ENCODE measurements at regions of chrX and their contacts with region 1.

Region 1: DNA sequence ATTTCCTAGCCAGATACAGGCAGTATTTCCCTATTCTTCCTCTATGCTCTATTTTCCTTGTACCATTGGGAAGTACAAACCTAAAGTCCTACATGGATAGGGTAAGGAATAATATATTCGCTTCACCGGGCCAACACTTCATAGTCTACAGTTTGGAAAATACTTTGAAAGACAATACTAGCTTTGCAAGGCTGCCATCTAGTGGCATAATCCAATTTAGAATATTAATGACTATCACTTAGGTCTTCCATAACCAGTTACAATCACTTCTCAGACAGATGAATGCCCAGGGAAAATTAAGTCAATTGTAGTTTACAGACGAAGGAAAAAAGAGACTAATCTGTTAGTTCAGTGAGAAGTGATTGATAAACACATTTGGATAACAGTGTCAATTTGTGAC is 141.0 kb upstream of the FAM47C start:
- DNase-seq: peak; percentile 29
- H3K4me3 ChIP-seq: no peak overlapping the region
- H3K27ac ChIP-seq: no peak overlapping the region
- H3K4me1 ChIP-seq: no peaks in the 10 kb centered on the region
- H3K27me3 ChIP-seq: no peaks in the 10 kb centered on the region
- CTCF ChIP-seq: peak in 1 of 2 donors; percentile 23
- POLR2A ChIP-seq: no peak

Region 2: GRCh38 chrX:35890699-35891098 is 976.4 kb before region 1 on chrX:
- CTCF ChIA-PET with region 1: no interaction called
- POLR2A ChIA-PET with region 1: no interaction called
- dilution Hi-C with region 1: no loop called
- intact Hi-C with region 1: loop called (anchors 2 kb)
- DNase-seq: no peak
- H3K4me3 ChIP-seq: no peak overlapping the region
- H3K27ac ChIP-seq: no peak overlapping the region
- H3K4me1 ChIP-seq: no peaks in the 10 kb centered on the region
- H3K27me3 ChIP-seq: no peaks in the 10 kb centered on the region
- CTCF ChIP-seq: peak in 1 of 2 donors; percentile 21
- POLR2A ChIP-seq: no peak

Region 3: GRCh38 chrX:36573720-36574119 is 293.4 kb before region 1 on chrX:
- CTCF ChIA-PET with region 1: no interaction called
- POLR2A ChIA-PET with region 1: no interaction called
- dilution Hi-C with region 1: no loop called
- intact Hi-C with region 1: no loop called
- DNase-seq: no peak
- H3K4me3 ChIP-seq: no peak overlapping the region
- H3K27ac ChIP-seq: no peak overlapping the region
- H3K4me1 ChIP-seq: no peaks in the 10 kb centered on the region
- H3K27me3 ChIP-seq: no peaks in the 10 kb centered on the region
- CTCF ChIP-seq: no peak
- POLR2A ChIP-seq: no peak

Region 4: GRCh38 chrX:36640047-36640631 is 227.0 kb before region 1 on chrX:
- CTCF ChIA-PET with region 1: no interaction called
- POLR2A ChIA-PET with region 1: no interaction called
- dilution Hi-C with region 1: no loop called
- intact Hi-C with region 1: no loop called
- DNase-seq: no peak
- H3K4me3 ChIP-seq: no peak overlapping the region
- H3K27ac ChIP-seq: no peak overlapping the region
- H3K4me1 ChIP-seq: no peaks in the 10 kb centered on the region
- H3K27me3 ChIP-seq: no peaks in the 10 kb centered on the region
- CTCF ChIP-seq: no peak
- POLR2A ChIP-seq: no peak